Calu3 (cell line): ENCODE measurements at regions of chr1 and their contacts with region 1.

Region 1: DNA sequence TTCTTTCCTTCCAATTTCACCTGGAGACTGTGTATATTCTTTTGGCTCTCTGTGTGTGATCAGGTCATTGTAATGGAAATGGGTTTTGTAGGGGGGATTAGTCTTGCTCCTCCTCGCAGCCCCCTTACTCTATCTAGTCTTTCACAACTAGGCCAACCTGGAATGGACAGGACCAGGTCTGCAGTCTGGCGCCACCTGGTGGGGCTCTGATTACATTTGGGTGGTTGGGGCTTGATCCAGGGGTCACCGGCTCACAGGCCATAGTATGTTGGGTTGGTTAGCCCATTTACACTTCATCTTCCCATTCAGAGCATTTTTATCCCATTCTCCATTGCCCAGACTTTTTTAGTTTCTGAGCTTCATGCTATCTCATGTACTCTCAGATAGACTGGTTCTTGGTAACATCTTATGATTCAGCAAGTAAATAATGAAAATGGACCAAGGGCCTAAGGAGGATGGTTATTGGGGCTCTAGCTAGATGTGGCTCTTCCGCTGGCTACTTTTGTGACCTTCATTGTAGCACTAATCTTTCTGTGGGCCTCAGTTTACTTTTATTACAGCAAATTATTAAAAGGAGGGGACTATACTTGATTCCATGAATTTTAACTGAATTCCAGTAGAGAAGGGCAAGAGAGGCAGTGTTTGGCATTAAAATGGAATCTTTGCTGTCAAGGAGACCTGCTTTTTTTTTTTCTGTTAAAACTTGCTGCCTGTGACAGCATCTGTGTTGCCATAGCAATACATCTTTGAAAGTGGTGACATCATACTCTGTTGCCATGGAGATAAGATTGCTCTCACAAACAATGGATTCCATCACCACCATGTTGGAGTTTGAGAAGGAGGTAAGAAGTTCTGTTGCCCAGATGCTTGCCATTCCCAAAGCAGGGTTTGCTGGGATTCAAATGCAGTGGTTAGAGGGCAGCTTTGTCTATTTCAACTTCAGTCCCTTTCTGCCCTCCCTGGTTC is 150.1 kb downstream of the PLXNA2 start:
- DNase-seq: peak; percentile 81
- H3K4me3 Mint-ChIP-seq: no peak overlapping the region
- H3K27ac Mint-ChIP-seq: no peak overlapping the region
- H3K4me1 Mint-ChIP-seq: no peaks in the 10 kb centered on the region
- H3K27me3 Mint-ChIP-seq: no peaks in the 10 kb centered on the region
- CTCF ChIP-seq: peak; percentile 83

Region 2: GRCh38 chr1:208024406-208024805 is 69.6 kb before region 1 on chr1:
- CTCF ChIA-PET with region 1: interaction called, 11 read pairs
- intact Hi-C with region 1: loop called (anchors 5 kb)
- DNase-seq: no peak
- H3K4me3 Mint-ChIP-seq: no peak overlapping the region
- H3K27ac Mint-ChIP-seq: no peak overlapping the region
- H3K4me1 Mint-ChIP-seq: no peaks in the 10 kb centered on the region
- H3K27me3 Mint-ChIP-seq: peaks cover 32% of the 10 kb centered on the region
- CTCF ChIP-seq: no peak

Region 3: DNA sequence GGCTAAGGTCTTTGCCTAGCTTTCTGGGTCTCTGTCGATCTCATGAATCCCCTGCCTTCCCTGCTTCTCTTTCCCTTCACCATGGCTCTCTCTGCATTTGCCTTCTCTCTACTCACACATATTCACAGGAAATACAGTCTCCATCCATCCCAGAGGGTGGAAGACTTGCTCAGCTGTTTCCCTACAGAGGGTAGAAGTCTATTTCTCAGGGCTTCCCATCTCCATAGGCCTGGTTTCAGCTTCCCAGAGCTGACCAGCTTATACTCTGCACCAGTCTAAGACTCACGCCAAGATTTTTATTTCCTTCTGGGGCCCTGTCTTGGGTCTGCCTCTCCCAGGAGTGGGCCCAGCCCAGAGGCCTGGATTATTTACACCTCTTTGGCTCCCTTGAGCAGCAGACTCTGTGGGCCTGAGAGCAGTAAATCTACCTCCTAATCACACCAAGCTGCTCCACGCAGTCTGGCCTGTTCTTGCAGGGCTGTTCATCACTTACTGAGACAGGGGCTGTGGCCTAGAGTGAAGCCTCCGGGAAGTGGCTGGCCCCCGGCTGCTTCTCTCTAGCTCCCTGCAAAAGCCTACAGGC is 47.7 kb after region 1 on chr1:
- CTCF ChIA-PET with region 1: no interaction called
- intact Hi-C with region 1: no loop called
- DNase-seq: no peak
- H3K4me3 Mint-ChIP-seq: no peak overlapping the region
- H3K27ac Mint-ChIP-seq: no peak overlapping the region
- H3K4me1 Mint-ChIP-seq: no peaks in the 10 kb centered on the region
- H3K27me3 Mint-ChIP-seq: no peaks in the 10 kb centered on the region
- CTCF ChIP-seq: no peak

Region 4: GRCh38 chr1:208184088-208184911 is 90.3 kb after region 1 on chr1:
- CTCF ChIA-PET with region 1: no interaction called
- intact Hi-C with region 1: no loop called
- DNase-seq: peak; percentile 57
- H3K4me3 Mint-ChIP-seq: no peak overlapping the region
- H3K27ac Mint-ChIP-seq: no peak overlapping the region
- H3K4me1 Mint-ChIP-seq: peaks cover 34% of the 10 kb centered on the region
- H3K27me3 Mint-ChIP-seq: no peaks in the 10 kb centered on the region
- CTCF ChIP-seq: no peak